ENCODE measurements at regions of chr17 and their contacts with region 1.

Region 1: DNA sequence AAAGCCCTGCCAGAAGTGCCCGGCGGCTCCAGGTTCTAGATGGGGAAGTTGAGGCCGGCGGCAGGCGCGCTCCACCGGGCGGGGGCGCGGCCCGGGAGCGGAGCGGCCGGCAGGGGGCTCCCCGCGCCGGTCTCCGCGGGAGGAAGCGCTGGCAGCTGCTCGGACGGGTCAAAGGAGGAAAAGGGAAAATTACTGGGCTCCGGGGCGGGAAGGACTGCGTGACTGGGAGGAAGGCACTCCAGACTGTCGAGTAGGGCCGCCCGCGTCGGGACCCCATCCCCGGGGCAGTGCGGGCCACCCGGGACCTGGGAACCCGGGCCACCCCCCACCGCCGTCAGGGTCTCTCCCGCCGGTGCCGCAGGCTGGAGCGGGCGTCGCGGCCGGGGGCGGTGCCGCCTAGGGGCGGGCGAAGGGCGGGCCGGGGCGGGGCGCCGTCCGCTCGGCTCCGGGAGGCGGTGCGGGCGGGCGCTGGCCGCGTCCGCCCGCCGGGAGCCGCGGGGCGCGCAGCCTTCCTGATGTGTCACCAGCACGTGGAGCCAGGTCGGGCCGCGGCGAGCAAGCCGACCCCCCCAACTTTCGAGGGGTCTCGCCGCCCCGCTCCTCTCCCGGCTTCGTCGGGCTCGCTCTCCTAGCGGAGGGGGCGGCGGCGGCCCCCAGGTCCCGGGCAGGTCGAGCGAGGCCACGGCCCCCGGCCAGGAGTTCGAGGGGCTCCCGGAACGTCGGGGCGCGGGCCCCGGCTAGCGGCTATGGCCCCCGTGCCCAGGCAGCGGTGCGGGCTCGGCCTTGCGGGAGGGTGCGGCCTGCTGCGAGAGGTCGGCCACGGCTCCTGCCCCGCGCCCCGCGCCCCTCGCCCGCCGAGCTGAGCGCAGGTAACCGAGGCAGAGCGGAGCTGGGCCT is 167.5 kb downstream of the RAB11FIP4 start:
- DNase-seq: peak; percentile 95
- H3K4me3 ChIP-seq: peak overlapping the region; percentile 58; a peak in 3 of 4 replicates
- H3K27ac ChIP-seq: peak overlapping the region; percentile 71 to 86
- H3K4me1 ChIP-seq: peaks cover 6 to 25% of the 10 kb centered on the region in 2 experiments; a peak in 3 of 4 replicates
- H3K27me3 ChIP-seq: no peaks in the 10 kb centered on the region
- CTCF ChIP-seq: peak; percentile 97
- EP300 ChIP-seq: no peak
- RAD21 ChIP-seq: peak; percentile 77

Region 2: DNA sequence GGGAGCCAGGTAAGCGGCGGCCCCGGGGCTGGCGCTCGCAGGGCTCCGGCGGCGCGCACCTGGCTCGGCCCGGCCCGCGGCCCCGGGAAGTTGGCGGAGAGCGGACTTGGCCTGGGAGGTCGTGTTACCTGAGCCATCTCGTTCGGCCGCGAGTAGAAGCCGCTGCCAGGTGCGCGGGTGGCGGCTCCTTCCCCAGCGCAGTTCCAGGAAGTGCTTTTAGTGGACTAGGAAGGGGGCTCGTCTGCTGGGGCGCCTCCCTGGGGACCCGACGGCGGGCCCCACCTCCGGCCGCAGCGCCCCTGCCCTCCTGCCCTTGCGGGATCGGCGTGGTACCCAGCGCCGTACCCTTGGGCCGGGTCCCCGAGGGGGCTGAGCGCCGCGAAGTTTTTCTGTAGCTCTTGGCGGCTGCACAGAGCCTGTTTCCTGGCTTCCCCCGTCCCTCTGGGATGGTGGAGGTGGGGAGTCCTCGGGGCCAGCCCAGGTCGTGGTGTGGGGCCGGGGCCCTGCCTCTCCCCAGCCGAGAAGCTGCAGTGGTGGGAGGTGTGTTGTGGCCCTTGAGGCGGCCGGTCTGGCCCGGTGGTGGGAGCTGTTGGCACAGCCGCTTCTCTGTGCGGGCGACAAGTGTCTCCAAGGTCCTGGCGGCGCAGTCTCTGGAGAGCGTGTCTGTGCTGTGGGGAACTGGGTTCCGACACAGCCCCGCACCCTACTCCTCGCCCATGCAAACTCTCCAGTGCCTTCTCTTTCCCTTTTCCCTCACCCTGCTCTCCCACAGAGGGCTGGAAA is 70.5 kb before region 1 on chr17:
- CTCF ChIA-PET with region 1: no interaction called
- POLR2A ChIA-PET with region 1: no interaction called
- DNase-seq: peak; percentile 68
- H3K4me3 ChIP-seq: peak overlapping the region; percentile 59 to 61
- H3K27ac ChIP-seq: no peak overlapping the region; a peak in 1 of 4 replicates
- H3K4me1 ChIP-seq: peaks cover 0 to 27% of the 10 kb centered on the region in 2 experiments; a peak in 1 of 4 replicates
- H3K27me3 ChIP-seq: peaks cover 5% of the 10 kb centered on the region; the same call in 1 of the 2 replicates
- CTCF ChIP-seq: no peak
- EP300 ChIP-seq: no peak
- RAD21 ChIP-seq: no peak

Region 3: GRCh38 chr17:31533546-31534155 is 25.3 kb before region 1 on chr17:
- CTCF ChIA-PET with region 1: interaction called, 14 read pairs
- POLR2A ChIA-PET with region 1: no interaction called
- DNase-seq: peak; percentile 81
- H3K4me3 ChIP-seq: no peak overlapping the region
- H3K27ac ChIP-seq: peak overlapping the region in 1 of 2 experiments; percentile 66; a peak in 2 of 4 replicates
- H3K4me1 ChIP-seq: peaks cover 11 to 16% of the 10 kb centered on the region in 2 experiments; a peak in 3 of 4 replicates
- H3K27me3 ChIP-seq: no peaks in the 10 kb centered on the region
- CTCF ChIP-seq: peak; percentile 55
- EP300 ChIP-seq: no peak; a peak in 1 of 4 replicates
- RAD21 ChIP-seq: peak; percentile 67

Region 4: DNA sequence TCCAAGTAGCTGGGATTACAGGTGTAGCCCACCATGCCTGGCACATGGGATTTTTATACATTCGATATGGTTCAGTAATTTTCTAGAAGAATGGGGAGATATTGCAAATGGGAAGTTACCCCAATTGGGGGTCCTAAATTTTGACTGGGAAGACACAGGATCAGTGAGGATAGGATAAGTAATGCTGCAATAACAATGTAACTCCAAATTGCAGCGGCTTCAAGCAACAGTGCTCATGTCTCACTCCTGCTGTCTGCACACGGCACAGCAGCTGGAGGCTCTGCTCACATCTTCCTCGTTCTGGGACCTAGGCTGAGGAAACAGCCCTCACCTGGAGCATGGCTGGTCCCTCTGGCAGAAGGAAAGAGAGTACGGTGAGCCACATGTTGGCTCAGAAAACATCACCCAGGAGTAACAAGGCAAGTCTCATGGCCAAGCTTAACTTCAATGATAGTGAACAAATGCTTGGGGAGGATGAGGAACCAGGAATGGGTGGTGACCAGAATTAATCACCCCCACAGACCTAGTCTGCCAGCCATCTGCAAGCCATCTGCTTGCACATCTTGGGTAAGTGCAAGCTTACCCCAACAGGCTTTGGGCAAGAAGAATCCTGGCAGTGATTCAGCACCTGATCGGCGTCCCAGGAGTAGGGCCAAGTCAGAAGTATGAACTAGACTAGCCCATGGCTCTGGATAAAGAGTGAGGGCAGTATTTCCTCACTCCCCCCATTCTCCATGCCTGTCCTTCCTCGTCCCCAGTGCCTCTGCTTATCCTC is 70.9 kb after region 1 on chr17:
- CTCF ChIA-PET with region 1: no interaction called
- POLR2A ChIA-PET with region 1: no interaction called
- DNase-seq: no peak
- H3K4me3 ChIP-seq: no peak overlapping the region
- H3K27ac ChIP-seq: no peak overlapping the region
- H3K4me1 ChIP-seq: peaks cover 0 to 6% of the 10 kb centered on the region in 2 experiments; a peak in 2 of 4 replicates
- H3K27me3 ChIP-seq: no peaks in the 10 kb centered on the region
- CTCF ChIP-seq: no peak
- EP300 ChIP-seq: peak in 1 of 2 experiments; percentile 47; a peak in 1 of 4 replicates
- RAD21 ChIP-seq: no peak

Region 5: GRCh38 chr17:31696184-31696602 is 137.2 kb after region 1 on chr17:
- CTCF ChIA-PET with region 1: interaction called, 25 read pairs
- POLR2A ChIA-PET with region 1: no interaction called
- DNase-seq: peak; percentile 90
- H3K4me3 ChIP-seq: no peak overlapping the region
- H3K27ac ChIP-seq: peak overlapping the region; percentile 84 to 89
- H3K4me1 ChIP-seq: peaks cover 23 to 24% of the 10 kb centered on the region in 2 experiments
- H3K27me3 ChIP-seq: no peaks in the 10 kb centered on the region
- CTCF ChIP-seq: peak; percentile 34; the same call in 1 of the 2 replicates
- EP300 ChIP-seq: peak; percentile 96 to 100
- RAD21 ChIP-seq: peak; percentile 49

Region 6: GRCh38 chr17:31858642-31859473 is 299.9 kb after region 1 on chr17 and contains the start of gene COPRS:
- CTCF ChIA-PET with region 1: interaction called, 10 read pairs
- POLR2A ChIA-PET with region 1: no interaction called
- DNase-seq: peak; percentile 99
- H3K4me3 ChIP-seq: peak within 1 kb of the TSS; percentile 59 to 76
- H3K27ac ChIP-seq: peak within 1 kb of the TSS; percentile 38 to 48; a peak in 2 of 4 replicates
- H3K4me1 ChIP-seq: peaks cover 0 to 13% of the 10 kb centered on the region in 2 experiments; a peak in 2 of 4 replicates
- H3K27me3 ChIP-seq: no peaks in the 10 kb centered on the region
- CTCF ChIP-seq: peak; percentile 25
- EP300 ChIP-seq: no peak
- RAD21 ChIP-seq: peak; percentile 23; the same call in 1 of the 2 replicates
- polyA plus RNA-seq, gene COPRS: 76.4 and 88.8 TPM in 2 replicates

Measured in SK-N-SH (cell line).